ENCODE measurements at regions of chr19 and their contacts with region 1.

Region 1: GRCh38 chr19:1540365-1540925 is 16.6 kb downstream of the PLK5 start:
- DNase-seq: no peak
- ATAC-seq: no peak

Region 2: DNA sequence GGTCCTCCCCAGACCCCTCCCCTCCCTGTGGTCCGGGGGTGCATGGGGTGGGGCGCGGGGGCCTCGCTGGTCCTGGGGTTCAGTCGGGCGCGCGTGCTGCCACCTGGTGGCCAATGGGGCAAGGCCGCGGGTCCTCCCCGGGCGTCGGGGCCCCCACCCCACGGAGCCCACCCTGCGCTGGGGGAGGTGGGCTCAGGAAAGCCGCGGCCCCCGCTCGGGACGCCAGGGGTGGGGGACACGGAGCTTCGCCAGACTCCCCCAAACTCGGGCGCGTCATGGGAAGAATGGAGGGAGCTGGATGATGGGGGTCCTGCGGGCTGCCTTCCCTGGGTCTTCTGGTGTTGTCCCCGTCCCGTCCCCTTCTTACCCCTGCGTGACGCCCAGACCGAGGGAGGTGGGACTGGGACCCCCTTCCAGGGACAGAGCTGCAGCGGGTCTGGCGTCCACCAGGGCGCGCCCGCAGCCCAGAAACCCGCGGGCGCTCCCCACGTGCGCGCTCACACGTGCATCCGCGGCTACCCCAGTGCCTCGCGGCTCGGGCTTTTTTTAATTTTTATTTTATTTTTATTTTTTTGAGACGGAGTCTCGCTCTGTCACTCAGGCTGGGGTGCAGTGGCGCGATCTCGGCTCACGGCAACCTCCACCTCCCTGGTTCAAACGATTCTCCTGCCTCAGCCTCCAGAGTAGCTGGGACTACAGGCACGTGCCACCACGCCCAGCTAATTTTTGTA is 131.8 kb after region 1 on chr19:
- intact Hi-C with region 1: loop called in 1 of 2 experiments (anchors 10 kb)
- DNase-seq: peak in 1 of 2 donors; percentile 67
- ATAC-seq: peak; percentile 87

Measured in left colon (tissue), 2 donors.